Dendritic cell treated with granulocyte-macrophage colony-stimulating factor and Interleukin-4, amounts not matched to agents 40 ng/mL and 50 ng/mL, for 4 days (primary cell): ENCODE measurements at regions of chr12 and their contacts with region 1.

Region 1: GRCh38 chr12:123232807-123233543 is at the starts of genes MPHOSPH9 and MTRFR:
- H3K4me3 Mint-ChIP-seq: peak within 1 kb of the TSS; percentile 99
- H3K27ac Mint-ChIP-seq: peak within 1 kb of the TSS; percentile 98
- H3K4me1 Mint-ChIP-seq: peaks cover 43% of the 10 kb centered on the region
- H3K27me3 Mint-ChIP-seq: no peaks in the 10 kb centered on the region

Region 2: GRCh38 chr12:122860346-122861090 is 372.5 kb before region 1 on chr12:
- intact Hi-C with region 1: loop called (anchors 10 kb)
- H3K4me3 Mint-ChIP-seq: no peak overlapping the region
- H3K27ac Mint-ChIP-seq: no peak overlapping the region
- H3K4me1 Mint-ChIP-seq: no peaks in the 10 kb centered on the region
- H3K27me3 Mint-ChIP-seq: peaks cover 5% of the 10 kb centered on the region

Region 3: DNA sequence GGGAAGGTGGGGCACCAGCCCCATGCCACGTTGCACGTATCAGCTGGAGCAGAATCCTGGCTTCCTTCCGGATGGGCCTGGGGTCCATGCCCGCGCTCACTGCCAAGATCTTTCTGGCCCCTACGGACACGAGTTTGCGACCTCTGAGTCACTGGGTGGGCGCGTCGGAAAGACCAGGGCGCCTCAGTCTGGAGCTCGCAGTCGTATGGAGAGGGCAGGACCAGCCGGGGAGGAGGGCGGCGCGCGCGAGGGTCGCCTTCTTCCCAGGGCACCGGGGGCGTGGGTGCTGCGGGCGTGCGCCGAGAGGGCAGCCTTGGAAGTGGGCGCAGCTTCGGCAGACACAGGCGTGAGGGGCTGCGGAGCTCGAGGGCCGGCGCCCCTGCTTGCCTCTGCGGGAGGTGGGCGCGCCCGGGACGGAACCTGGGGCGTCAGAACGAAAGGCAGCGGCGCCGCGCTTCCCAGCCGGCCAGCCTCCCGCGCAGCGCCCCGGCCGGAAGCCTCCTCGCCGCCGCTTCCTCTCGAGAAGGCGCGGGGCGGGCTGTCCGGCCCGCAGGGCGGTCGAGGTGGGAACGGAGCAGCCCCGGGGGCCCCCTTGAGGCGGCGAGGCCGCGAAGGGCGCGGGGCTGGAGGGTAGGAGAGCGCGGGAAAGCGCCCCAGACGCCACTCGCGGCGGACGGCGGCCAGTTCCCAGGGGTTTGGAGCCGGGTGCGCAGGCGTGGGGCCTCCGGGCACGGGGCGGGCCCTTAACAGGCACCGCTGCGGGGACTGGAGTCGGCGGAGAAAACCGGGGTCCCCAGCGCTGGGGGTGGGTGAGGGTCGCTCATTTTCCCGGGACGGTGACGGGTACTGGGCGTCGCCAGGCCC is 252.6 kb before region 1 on chr12 and contains the start of gene ARL6IP4:
- intact Hi-C with region 1: loop called (anchors 5 kb)
- H3K4me3 Mint-ChIP-seq: peak within 1 kb of the TSS; percentile 95
- H3K27ac Mint-ChIP-seq: peak within 1 kb of the TSS; percentile 96
- H3K4me1 Mint-ChIP-seq: peaks cover 90% of the 10 kb centered on the region
- H3K27me3 Mint-ChIP-seq: no peaks in the 10 kb centered on the region

Region 4: GRCh38 chr12:123043536-123044001 is 189.4 kb before region 1 on chr12:
- intact Hi-C with region 1: loop called (anchors 5 kb)
- H3K4me3 Mint-ChIP-seq: no peak overlapping the region
- H3K27ac Mint-ChIP-seq: no peak overlapping the region
- H3K4me1 Mint-ChIP-seq: no peaks in the 10 kb centered on the region
- H3K27me3 Mint-ChIP-seq: no peaks in the 10 kb centered on the region